ENCODE measurements at regions of chr1 and their contacts with region 1.

Region 1: GRCh38 chr1:35151220-35151619 is 41.7 kb downstream of the SFPQ start:
- DNase-seq: no peak
- H3K4me3 ChIP-seq: no peak overlapping the region
- H3K27ac ChIP-seq: no peak overlapping the region
- H3K4me1 ChIP-seq: no peaks in the 10 kb centered on the region
- H3K27me3 ChIP-seq: no peaks in the 10 kb centered on the region
- CTCF ChIP-seq: no peak
- POLR2A ChIP-seq: no peak

Region 2: GRCh38 chr1:35488336-35488735 is 337.1 kb after region 1 on chr1:
- intact Hi-C with region 1: loop called (anchors 5 kb)
- DNase-seq: no peak
- H3K4me3 ChIP-seq: no peak overlapping the region
- H3K27ac ChIP-seq: no peak overlapping the region
- H3K4me1 ChIP-seq: no peaks in the 10 kb centered on the region
- H3K27me3 ChIP-seq: no peaks in the 10 kb centered on the region
- CTCF ChIP-seq: no peak
- POLR2A ChIP-seq: no peak

Measured in thyroid gland (tissue), 4 donors.